KBM-7 (cell line): ENCODE measurements at regions of chr12 and their contacts with region 1.

Region 1: GRCh38 chr12:123232807-123233543 is at the starts of genes MPHOSPH9 and MTRFR:
- DNase-seq: peak; percentile 100

Region 2: DNA sequence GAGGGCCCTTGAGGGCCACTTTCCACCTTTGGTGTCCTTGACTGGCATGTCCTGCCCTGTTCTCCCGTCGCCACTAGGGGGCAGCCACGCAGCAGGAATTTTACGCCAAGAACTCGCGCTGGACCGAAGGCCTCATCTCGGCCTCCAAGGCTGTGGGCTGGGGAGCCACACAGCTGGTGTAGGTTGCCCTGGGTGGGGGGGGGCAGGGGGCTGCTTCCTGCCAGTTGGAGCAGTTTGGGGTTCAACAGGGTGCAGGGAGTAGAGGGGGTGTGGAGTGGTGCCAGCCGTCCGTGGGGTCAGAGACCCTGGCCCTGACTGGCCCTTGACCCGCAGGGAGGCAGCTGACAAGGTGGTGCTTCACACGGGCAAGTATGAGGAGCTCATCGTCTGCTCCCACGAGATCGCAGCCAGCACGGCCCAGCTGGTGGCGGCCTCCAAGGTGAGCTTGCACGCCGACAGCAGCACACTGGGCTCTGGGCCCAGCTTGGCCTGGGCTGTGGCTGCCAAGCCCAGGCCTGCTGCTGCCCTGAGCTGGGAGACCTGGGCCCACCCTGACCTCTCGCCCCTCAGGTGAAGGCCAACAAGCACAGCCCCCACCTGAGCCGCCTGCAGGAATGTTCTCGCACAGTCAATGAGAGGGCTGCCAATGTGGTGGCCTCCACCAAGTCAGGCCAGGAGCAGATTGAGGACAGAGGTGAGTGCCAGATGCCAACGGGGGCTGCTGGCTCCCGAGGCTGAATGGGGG is 372.5 kb before region 1 on chr12:
- in situ Hi-C with region 1: loop called (anchors 25 kb)
- DNase-seq: peak; percentile 70

Region 3: GRCh38 chr12:123278101-123278627 is 45.2 kb after region 1 on chr12:
- in situ Hi-C with region 1: no loop called
- DNase-seq: peak; percentile 76